Naive thymus-derived CD4-positive, alpha-beta T cell (primary cell): ENCODE measurements at regions of chr3 and their contacts with region 1.

Region 1: GRCh38 chr3:127697551-127698240 is 24.9 kb downstream of the ABTB1 start:
- DNase-seq: peak in 8 of 9 donors; percentile 27 to 59 (median 48)
- ATAC-seq: peak; percentile 76
- H3K4me3 ChIP-seq: no peak overlapping the region
- H3K4me3 Mint-ChIP-seq: peak overlapping the region in 2 of 10 donors; percentile 31 to 52
- H3K27ac ChIP-seq: no peak overlapping the region
- H3K27ac Mint-ChIP-seq: peak overlapping the region in 1 of 9 donors; percentile 77
- H3K4me1 ChIP-seq: no peaks in the 10 kb centered on the region
- H3K4me1 Mint-ChIP-seq: peaks cover 0 to 5% (median 4%) of the 10 kb centered on the region in 7 donors
- H3K27me3 ChIP-seq: no peaks in the 10 kb centered on the region
- H3K27me3 Mint-ChIP-seq: peaks cover 0 to 5% (median 0%) of the 10 kb centered on the region in 5 donors

Region 2: GRCh38 chr3:127351321-127351720 is 346.4 kb before region 1 on chr3:
- CTCF ChIA-PET with region 1: no interaction called
- POLR2A ChIA-PET with region 1: no interaction called
- intact Hi-C with region 1: no loop called
- DNase-seq: no peak
- ATAC-seq: no peak
- H3K4me3 ChIP-seq: no peak overlapping the region
- H3K4me3 Mint-ChIP-seq: no peak overlapping the region
- H3K27ac ChIP-seq: no peak overlapping the region
- H3K27ac Mint-ChIP-seq: no peak overlapping the region
- H3K4me1 ChIP-seq: no peaks in the 10 kb centered on the region
- H3K4me1 Mint-ChIP-seq: no peaks in the 10 kb centered on the region
- H3K27me3 ChIP-seq: no peaks in the 10 kb centered on the region
- H3K27me3 Mint-ChIP-seq: peaks cover 0 to 32% (median 13%) of the 10 kb centered on the region in 5 donors

Region 3: DNA sequence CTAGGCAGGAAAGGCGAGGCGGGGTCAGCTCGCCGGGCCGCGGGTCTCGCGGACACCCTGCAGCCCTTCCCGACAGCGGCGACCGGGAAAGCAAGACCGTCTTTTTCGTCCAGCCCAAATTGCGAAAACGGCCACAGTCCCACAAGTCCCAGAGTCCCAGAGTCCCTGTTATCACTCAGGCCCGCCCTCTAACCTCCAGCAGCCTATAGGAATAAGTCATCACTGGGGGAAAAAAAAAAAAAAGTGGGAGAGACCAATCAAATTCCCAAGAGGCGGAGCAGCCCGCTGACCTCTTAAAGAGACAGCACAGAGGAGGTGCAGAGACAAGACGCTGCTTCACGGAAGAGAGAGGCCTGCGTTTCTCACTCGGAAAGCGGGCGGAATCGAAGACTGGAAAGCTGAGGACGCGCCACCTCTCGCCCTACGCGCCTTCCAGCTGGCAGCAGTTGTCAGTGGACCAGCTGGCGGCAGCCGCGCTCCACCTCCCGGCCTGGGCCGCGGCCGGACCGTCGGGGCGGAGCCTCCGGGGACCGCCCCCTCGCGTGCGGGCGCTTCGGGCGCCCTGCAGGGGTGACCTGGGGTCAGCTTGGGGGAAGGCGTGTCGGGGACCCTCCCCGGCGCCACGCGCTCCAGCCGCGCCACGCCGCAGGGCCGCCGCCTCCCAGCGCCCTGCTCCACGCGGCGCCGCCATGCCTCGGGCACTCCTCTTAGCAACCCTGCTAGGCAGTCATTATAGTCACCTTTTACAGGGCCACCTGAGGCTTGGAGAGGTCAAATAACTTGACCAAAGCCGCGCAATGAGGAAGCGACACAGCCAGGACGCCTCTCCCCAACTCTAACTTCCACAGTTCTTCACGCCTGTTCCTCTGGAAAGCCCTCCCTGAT is 106.9 kb before region 1 on chr3 and contains the start of gene TPRA1:
- CTCF ChIA-PET with region 1: interaction called, 8 read pairs
- POLR2A ChIA-PET with region 1: interaction called, 3 read pairs
- intact Hi-C with region 1: loop called (anchors 1 kb)
- DNase-seq: peak; percentile 58 to 90 (median 85)
- ATAC-seq: peak; percentile 90
- H3K4me3 ChIP-seq: peak within 1 kb of the TSS; percentile 91
- H3K4me3 Mint-ChIP-seq: peak within 1 kb of the TSS; percentile 86 to 99 (median 96)
- H3K27ac ChIP-seq: peak within 1 kb of the TSS; percentile 80
- H3K27ac Mint-ChIP-seq: peak within 1 kb of the TSS; percentile 86 to 96 (median 94)
- H3K4me1 ChIP-seq: peaks cover 11 to 12% of the 10 kb centered on the region in 2 donors
- H3K4me1 Mint-ChIP-seq: peaks cover 14 to 51% (median 43%) of the 10 kb centered on the region in 7 donors
- H3K27me3 ChIP-seq: no peaks in the 10 kb centered on the region
- H3K27me3 Mint-ChIP-seq: no peaks in the 10 kb centered on the region
- total RNA-seq, gene TPRA1: 13.6 to 30.6 (median 24.5) TPM

Region 4: GRCh38 chr3:127652231-127652995 is 45.3 kb before region 1 on chr3:
- CTCF ChIA-PET with region 1: interaction called, 21 read pairs
- POLR2A ChIA-PET with region 1: no interaction called
- intact Hi-C with region 1: loop called (anchors 1 kb)
- DNase-seq: peak in 3 of 9 donors; percentile 16 to 44 (median 35)
- ATAC-seq: peak; percentile 83
- H3K4me3 ChIP-seq: no peak overlapping the region
- H3K4me3 Mint-ChIP-seq: no peak overlapping the region
- H3K27ac ChIP-seq: no peak overlapping the region
- H3K27ac Mint-ChIP-seq: peak overlapping the region in 1 of 9 donors; percentile 3
- H3K4me1 ChIP-seq: no peaks in the 10 kb centered on the region
- H3K4me1 Mint-ChIP-seq: peaks cover 0 to 2% (median 0%) of the 10 kb centered on the region in 7 donors
- H3K27me3 ChIP-seq: no peaks in the 10 kb centered on the region
- H3K27me3 Mint-ChIP-seq: peaks cover 0 to 4% (median 0%) of the 10 kb centered on the region in 5 donors

Region 5: DNA sequence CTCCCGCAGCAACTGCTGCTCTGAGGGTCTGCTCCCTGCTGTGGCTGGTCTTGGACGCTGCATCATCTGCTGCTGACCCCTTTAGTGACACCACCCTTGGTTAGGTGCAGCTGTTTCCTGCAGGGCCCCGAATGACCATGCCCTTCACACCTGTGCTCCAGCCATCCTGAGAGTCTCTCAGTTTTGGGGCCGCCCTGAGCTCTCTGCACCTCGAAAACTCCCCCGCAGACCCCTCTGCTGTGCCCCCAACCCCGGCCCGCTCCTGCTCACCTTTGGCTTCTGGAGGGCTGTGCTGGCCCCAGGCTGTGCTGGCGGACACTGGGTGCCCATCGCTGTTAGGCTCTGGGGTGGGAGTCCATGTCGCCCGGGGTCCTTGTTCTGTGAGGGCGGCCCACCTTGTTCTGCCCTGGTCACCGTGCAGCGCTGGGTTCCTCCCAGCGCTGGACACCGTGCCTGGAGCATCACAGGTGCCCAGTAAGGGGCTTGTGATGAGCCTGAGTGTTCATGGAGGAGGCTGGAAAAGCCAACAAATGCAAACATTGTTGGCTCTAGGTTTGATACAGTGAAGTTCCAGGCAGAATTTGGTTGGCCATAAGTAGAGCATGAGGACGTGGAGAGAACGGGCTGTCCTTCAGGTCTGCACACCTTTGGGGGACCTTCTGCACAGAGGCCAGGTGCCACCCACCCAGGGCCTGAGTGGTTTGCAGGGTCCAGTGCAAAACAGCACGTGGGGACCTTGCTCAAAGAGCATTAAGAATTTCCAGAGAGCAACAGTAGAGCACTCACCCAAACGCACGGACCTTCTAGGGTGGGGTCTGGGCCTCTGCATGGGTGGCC is 12.6 kb before region 1 on chr3:
- CTCF ChIA-PET with region 1: interaction called, 11 read pairs
- POLR2A ChIA-PET with region 1: interaction called, 5 read pairs
- intact Hi-C with region 1: no loop called
- DNase-seq: no peak
- ATAC-seq: no peak
- H3K4me3 ChIP-seq: no peak overlapping the region
- H3K4me3 Mint-ChIP-seq: no peak overlapping the region
- H3K27ac ChIP-seq: no peak overlapping the region
- H3K27ac Mint-ChIP-seq: no peak overlapping the region
- H3K4me1 ChIP-seq: no peaks in the 10 kb centered on the region
- H3K4me1 Mint-ChIP-seq: peaks cover 6 to 19% (median 15%) of the 10 kb centered on the region in 7 donors
- H3K27me3 ChIP-seq: no peaks in the 10 kb centered on the region
- H3K27me3 Mint-ChIP-seq: no peaks in the 10 kb centered on the region